CD14-positive monocyte (primary cell): ENCODE measurements at regions of chr1 and their contacts with region 1.

Region 1: GRCh38 chr1:33616773-33617172 is 144.3 kb downstream of the ZSCAN20 start:
- DNase-seq: no peak
- H3K4me3 ChIP-seq: no peak overlapping the region
- H3K4me3 Mint-ChIP-seq: no peak overlapping the region
- H3K27ac ChIP-seq: no peak overlapping the region
- H3K27ac Mint-ChIP-seq: no peak overlapping the region
- H3K4me1 ChIP-seq: no peaks in the 10 kb centered on the region
- H3K4me1 Mint-ChIP-seq: peaks cover 2% of the 10 kb centered on the region
- H3K27me3 ChIP-seq: peaks cover 0 to 2% of the 10 kb centered on the region in 2 donors
- H3K27me3 Mint-ChIP-seq: peaks cover 8 to 21% (median 11%) of the 10 kb centered on the region in 3 donors
- CTCF ChIP-seq: no peak

Region 2: DNA sequence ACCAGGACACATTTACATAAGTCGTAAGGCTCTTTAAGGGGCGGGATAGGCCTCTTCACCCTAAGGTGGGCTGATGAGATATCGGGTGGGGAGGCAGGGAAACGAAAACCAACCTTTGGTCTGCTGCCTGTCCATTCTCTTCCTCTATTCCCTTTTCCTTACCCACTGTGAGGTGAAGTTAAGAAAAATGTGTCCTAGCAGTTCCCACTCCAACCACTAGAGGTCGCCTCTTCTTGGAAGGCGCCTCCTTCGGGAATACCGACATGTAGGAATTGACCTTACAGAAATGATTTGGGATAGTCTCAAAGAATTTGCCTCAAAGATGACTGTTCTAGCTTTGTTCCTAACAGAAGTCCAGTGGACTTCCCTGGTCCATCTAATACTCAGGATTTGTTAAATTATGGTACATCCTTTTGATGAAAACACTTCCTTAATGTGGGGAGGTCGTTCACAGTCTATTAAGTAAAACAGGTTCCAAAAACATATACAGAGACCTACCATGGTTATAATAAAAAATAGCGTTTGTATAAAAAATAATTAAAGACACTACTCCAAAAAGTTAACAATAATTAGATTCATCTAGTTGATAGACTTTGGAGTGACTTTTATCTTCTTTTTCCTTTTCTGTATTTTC is 521.7 kb before region 1 on chr1:
- intact Hi-C with region 1: loop called in 1 of 2 experiments (anchors 10 kb)
- DNase-seq: peak in 2 of 3 donors; percentile 31 to 42
- H3K4me3 ChIP-seq: no peak overlapping the region
- H3K4me3 Mint-ChIP-seq: no peak overlapping the region
- H3K27ac ChIP-seq: no peak overlapping the region
- H3K27ac Mint-ChIP-seq: no peak overlapping the region
- H3K4me1 ChIP-seq: peaks cover 10 to 18% of the 10 kb centered on the region in 2 donors
- H3K4me1 Mint-ChIP-seq: peaks cover 26% of the 10 kb centered on the region
- H3K27me3 ChIP-seq: no peaks in the 10 kb centered on the region
- H3K27me3 Mint-ChIP-seq: peaks cover 2 to 6% (median 6%) of the 10 kb centered on the region in 3 donors
- CTCF ChIP-seq: peak; percentile 93

Region 3: DNA sequence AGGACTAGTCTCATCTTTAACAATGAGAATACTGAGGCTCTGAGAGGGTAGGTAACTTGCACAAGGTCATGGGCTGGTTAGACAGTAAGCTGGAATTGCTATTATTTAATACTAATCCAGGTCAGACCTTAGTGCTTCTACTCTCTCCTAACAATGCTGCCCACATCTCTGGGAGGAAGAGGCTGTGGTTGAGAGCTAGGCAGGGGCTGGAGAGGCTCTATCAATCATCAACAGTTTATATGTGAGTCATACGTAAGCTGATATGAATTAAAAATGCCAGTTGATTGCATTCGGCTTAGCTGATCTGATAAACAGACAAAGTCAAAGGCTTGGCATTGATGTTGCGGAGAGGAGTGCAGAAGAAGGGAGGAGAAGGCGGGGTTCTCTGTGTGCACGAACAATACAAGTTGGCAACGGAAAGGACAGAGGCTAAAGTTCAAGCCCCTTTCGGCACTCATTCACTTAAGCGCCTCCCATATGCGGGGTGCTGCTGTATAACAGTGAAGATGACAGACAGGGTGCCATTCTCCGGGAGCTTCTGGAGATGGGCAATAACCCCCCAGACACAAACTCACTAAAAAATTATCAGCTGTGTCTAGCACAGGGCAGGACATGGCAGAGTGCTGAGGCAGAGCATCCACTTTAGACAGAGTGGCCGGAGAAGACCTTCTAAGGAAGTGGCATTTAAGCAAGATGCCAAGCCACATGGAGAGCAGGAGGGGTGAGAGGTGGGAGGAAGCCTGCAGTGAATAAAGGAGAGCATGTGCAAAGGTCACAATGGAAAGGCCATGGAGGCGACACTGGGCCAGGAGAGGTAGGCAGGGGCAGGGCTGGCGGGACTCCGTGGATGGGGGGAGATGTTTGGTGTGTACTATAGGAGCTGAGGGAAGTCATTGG is 50.9 kb after region 1 on chr1:
- intact Hi-C with region 1: no loop called
- DNase-seq: no peak
- H3K4me3 ChIP-seq: no peak overlapping the region
- H3K4me3 Mint-ChIP-seq: no peak overlapping the region
- H3K27ac ChIP-seq: no peak overlapping the region
- H3K27ac Mint-ChIP-seq: no peak overlapping the region
- H3K4me1 ChIP-seq: no peaks in the 10 kb centered on the region
- H3K4me1 Mint-ChIP-seq: no peaks in the 10 kb centered on the region
- H3K27me3 ChIP-seq: no peaks in the 10 kb centered on the region
- H3K27me3 Mint-ChIP-seq: peaks cover 2 to 10% (median 5%) of the 10 kb centered on the region in 3 donors
- CTCF ChIP-seq: no peak